Activated CD4-positive, alpha-beta memory T cell treated with anti-CD3 and anti-CD28 coated beads for 36 hours (primary cell): ENCODE measurements at regions of chr1 and their contacts with region 1.

Region 1: GRCh38 chr1:240611619-240612480 is at the start of gene GREM2:
- DNase-seq: peak; percentile 73
- H3K4me3 Mint-ChIP-seq: peak within 1 kb of the TSS; percentile 79
- H3K27ac Mint-ChIP-seq: peak within 1 kb of the TSS; percentile 5
- H3K4me1 Mint-ChIP-seq: peaks cover 32% of the 10 kb centered on the region
- H3K27me3 Mint-ChIP-seq: peaks cover 29% of the 10 kb centered on the region
- total RNA-seq, gene GREM2: 0.26 to 0.46 TPM

Region 2: DNA sequence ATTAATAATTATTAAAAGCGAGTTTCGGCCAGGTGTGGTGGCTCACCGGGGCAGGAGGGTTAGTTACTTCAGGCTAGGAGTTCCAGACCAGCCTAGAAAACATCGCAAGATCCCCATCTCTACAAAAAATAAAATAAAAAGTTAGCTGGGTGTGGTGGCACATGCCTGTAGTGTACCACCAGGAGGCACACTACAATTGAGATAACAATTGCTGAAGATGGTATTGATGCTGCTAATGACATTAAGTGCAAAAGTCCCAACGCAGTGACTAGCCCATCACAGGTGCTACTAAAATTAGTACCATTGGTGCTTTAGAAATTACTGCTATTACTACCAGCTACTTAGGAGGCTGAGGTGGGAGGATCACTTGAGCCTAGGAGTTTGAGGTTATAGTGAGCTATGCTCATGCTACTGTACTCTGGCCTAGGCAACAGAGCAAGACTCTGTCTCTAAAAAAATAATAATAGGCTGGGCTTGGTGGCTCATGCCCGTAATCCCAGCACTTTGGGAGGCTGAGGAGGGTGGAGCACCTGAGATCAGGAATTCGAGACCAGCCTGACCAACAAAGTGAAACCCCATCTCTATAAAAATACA is 156.5 kb before region 1 on chr1:
- CTCF ChIA-PET with region 1: interaction called, 16 read pairs
- POLR2A ChIA-PET with region 1: no interaction called
- intact Hi-C with region 1: loop called (anchors 2 kb)
- DNase-seq: no peak
- H3K4me3 Mint-ChIP-seq: no peak overlapping the region
- H3K27ac Mint-ChIP-seq: no peak overlapping the region
- H3K4me1 Mint-ChIP-seq: no peaks in the 10 kb centered on the region
- H3K27me3 Mint-ChIP-seq: no peaks in the 10 kb centered on the region

Region 3: DNA sequence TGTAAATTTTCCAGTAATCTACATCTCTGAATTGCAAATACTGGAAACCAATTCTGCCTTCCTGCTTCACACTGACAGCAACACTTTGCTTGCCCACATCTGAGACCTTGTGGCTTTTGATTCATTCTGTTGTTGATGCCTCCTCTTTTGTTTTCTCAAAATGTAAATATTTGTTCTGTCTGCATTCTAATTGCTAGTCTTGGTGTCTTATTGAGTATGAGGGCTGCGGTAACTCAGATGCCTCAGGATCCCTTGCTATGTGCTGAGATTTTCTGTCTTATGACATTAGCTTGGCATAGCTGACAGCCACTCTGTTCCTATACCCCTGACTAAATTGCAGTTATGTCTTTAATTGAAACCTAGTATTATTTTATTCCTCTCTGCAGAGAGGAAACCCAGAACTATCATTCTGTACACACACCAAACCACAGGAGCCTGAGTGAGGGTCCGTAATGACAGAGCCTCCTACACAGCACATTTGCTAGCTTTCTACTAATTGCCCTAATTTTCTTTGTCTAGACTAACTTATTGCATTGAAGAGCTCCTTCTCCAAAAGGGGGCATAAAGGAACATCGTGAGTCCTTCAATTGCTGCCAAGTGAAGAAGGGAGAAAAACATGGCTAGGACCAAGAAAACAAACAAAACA is 72.0 kb before region 1 on chr1:
- CTCF ChIA-PET with region 1: no interaction called
- POLR2A ChIA-PET with region 1: no interaction called
- intact Hi-C with region 1: no loop called
- DNase-seq: no peak
- H3K4me3 Mint-ChIP-seq: no peak overlapping the region
- H3K27ac Mint-ChIP-seq: no peak overlapping the region
- H3K4me1 Mint-ChIP-seq: peaks cover 15% of the 10 kb centered on the region
- H3K27me3 Mint-ChIP-seq: no peaks in the 10 kb centered on the region

Region 4: DNA sequence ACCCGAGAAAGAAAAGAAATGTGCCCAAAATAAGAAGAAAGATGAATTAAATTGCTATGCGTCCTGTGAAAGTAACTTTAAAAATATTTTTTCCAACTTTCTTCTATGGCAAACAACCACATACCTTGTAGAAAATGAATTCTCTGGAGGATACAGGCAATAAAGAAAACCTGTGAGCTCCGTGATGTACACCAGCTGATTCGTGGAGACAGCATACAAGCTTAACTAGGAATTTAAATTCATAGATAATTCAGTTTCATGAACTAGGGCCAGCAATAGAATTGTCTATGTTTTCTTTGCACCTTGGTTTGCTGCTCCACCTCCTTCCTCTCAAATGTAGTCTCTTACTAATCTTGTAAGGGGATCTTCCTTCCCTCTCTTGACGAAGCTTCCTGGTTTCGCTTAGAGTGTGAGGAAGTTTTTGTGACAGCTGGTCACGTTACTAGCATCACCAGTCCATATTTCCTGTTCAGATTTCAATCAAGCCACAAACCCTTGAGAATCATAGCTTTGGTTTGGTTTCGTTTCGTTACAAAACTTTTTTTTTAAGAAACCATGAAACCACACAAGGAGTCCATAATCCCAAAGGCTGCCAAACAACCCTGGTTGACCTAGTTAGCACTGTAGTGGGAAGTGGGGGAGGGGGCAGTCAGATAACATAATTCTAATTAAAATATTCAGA is 35.7 kb before region 1 on chr1:
- CTCF ChIA-PET with region 1: no interaction called
- POLR2A ChIA-PET with region 1: no interaction called
- intact Hi-C with region 1: loop called (anchors 1 kb)
- DNase-seq: peak; percentile 13
- H3K4me3 Mint-ChIP-seq: no peak overlapping the region
- H3K27ac Mint-ChIP-seq: no peak overlapping the region
- H3K4me1 Mint-ChIP-seq: peaks cover 16% of the 10 kb centered on the region
- H3K27me3 Mint-ChIP-seq: no peaks in the 10 kb centered on the region

Region 5: DNA sequence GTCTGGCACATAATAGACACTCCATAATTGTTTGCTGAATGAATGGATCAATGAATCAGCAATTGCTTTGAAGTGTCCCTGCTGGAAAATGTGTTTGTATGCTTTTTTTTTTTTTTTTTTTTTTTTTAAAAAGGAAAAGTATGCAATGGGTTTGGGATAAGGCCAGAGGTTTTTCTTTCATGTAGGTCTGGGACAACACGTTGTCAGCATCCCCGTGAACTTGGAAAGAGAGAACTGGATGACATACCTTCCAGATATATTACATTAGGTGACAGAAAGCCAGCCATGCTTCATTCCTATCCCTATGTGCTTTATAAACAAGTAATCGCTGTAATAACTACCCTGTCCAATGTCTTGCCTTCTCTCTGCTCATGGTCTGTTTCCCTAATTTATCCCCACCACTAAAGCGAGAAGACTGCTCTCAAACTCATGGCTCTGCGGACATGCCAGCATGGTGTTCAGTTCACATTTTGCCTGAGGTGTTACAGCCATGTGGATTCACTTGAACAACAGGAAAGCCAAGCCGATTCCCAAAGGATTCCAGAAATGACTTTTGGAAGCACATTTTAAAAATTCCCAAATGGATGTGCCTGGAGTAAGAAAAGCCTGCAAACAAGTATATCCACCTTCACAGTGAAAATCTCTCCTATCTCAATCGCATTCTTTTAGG is 34.9 kb after region 1 on chr1:
- CTCF ChIA-PET with region 1: no interaction called
- POLR2A ChIA-PET with region 1: no interaction called
- intact Hi-C with region 1: no loop called
- DNase-seq: no peak
- H3K4me3 Mint-ChIP-seq: no peak overlapping the region
- H3K27ac Mint-ChIP-seq: no peak overlapping the region
- H3K4me1 Mint-ChIP-seq: no peaks in the 10 kb centered on the region
- H3K27me3 Mint-ChIP-seq: no peaks in the 10 kb centered on the region

Region 6: GRCh38 chr1:240691521-240692338 is 79.9 kb after region 1 on chr1:
- CTCF ChIA-PET with region 1: interaction called, 4 read pairs
- POLR2A ChIA-PET with region 1: no interaction called
- intact Hi-C with region 1: loop called (anchors 2 kb)
- DNase-seq: peak; percentile 24
- H3K4me3 Mint-ChIP-seq: no peak overlapping the region
- H3K27ac Mint-ChIP-seq: no peak overlapping the region
- H3K4me1 Mint-ChIP-seq: peaks cover 13% of the 10 kb centered on the region
- H3K27me3 Mint-ChIP-seq: peaks cover 1% of the 10 kb centered on the region